PC-3 (cell line): ENCODE measurements at regions of chr2 and their contacts with region 1.

Region 1: DNA sequence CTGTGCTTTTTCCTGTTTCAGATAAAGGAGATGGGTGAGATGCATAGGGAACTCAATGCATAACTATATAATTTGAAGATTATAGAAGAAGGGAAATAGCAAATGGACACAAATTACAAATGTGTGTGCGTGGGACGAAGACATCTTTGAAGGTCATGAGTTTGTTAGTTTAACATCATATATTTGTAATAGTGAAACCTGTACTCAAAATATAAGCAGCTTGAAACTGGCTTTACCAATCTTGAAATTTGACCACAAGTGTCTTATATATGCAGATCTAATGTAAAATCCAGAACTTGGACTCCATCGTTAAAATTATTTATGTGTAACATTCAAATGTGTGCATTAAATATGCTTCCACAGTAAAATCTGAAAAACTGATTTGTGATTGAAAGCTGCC is 16.4 kb upstream of the MSH2 start:
- DNase-seq: no peak
- ATAC-seq: no peak
- H3K4me3 ChIP-seq: no peak overlapping the region
- H3K27ac ChIP-seq: no peak overlapping the region
- H3K4me1 ChIP-seq: no peaks in the 10 kb centered on the region
- H3K27me3 ChIP-seq: no peaks in the 10 kb centered on the region
- CTCF ChIP-seq: no peak

Region 2: DNA sequence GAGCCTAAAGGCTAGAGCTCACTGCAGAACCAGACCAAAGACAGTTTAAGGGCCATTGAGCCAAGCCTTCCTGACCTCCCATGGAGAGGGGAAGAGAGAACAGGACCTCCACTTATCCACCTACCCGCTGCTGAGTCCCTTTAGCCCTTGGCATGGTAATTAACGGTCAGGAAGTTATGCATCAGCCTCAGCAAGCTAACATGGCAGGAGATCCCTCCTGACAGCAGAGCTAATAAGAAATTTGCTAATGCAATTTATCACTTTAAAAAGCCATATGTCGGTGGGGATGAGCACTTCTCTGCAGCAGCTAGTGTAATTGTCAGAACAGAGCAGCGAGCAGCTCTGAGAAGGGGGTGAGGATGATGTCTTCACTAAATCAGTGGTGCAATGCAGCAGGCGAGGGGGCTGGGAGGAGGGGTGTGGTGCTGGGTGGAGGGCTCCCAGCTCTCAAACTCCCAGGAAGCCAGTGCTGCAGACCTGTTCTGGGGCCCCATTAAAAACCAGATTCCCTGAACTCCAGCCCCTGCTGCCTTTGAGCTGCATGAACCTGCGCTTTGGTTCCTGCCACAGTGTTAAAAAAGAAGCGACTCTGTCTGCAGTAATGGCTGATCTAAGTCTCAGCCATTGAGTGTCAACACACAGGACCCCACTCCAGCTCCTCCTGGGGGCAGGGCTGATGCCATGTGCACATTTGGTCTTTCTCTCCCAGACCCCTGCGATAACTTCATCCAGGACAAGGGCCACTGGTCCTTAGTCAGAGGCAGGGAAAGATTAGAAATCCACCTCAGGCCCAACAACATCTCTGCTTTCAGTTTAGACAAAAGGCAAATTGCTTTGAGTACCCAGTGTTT is 147.2 kb before region 1 on chr2:
- CTCF ChIA-PET with region 1: no interaction called
- POLR2A ChIA-PET with region 1: no interaction called
- intact Hi-C with region 1: no loop called
- DNase-seq: no peak
- ATAC-seq: no peak
- H3K4me3 ChIP-seq: no peak overlapping the region
- H3K27ac ChIP-seq: no peak overlapping the region
- H3K4me1 ChIP-seq: no peaks in the 10 kb centered on the region
- H3K27me3 ChIP-seq: no peaks in the 10 kb centered on the region
- CTCF ChIP-seq: no peak

Region 3: DNA sequence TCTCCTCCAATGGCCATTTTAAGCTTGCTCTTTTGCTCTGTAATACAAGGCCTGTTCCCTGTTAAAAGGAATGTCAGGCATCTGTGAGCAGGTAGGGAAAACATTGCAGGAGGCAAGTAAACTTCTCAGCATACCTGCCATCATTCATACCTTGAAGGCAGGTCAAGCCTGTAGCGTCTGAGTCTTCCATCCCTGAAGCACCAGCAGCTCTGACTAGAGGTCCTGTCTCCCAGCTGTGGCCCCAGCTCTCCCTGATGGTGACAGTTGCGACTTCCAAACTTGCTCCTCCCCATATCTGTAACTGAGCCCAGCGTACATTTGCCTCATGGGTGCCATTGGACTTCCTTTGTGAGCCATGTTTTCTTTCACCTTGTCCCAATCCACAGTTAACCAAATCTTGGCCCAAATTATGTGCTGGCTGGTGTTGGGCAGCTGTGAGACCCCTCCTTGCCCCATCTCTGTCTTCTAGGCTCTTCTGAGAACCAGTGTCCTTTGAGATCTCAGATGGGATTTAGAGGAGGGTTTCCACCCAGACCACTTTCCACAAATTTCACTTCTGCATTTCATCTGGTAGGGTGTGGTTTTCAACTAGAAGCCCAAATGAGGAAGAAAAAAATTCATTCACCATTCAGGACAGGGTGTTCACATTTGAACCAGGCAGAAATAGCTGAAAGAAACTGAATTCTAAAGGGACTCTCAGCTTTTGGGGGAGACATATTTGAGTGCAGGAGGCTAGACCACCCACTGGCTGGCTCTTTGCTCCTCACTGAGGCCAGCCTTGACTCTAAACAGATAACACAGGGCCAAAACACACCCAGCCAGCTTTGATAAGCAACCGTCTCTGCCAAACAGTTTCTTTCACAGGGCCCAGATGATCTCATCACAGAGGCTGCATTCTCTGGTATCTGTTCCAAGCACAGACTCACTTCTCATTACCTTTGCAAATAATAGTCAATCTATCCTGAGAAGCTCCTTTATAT is 50.0 kb before region 1 on chr2:
- CTCF ChIA-PET with region 1: interaction called, 46 read pairs
- POLR2A ChIA-PET with region 1: interaction called, 19 read pairs
- intact Hi-C with region 1: loop called (anchors 1 kb)
- DNase-seq: no peak
- ATAC-seq: no peak
- H3K4me3 ChIP-seq: no peak overlapping the region
- H3K27ac ChIP-seq: no peak overlapping the region
- H3K4me1 ChIP-seq: peaks cover 14% of the 10 kb centered on the region
- H3K27me3 ChIP-seq: no peaks in the 10 kb centered on the region
- CTCF ChIP-seq: no peak

Region 4: GRCh38 chr2:47373747-47374146 is 12.8 kb before region 1 on chr2:
- CTCF ChIA-PET with region 1: interaction called, 4 read pairs
- POLR2A ChIA-PET with region 1: interaction called, 7 read pairs
- intact Hi-C with region 1: loop called (anchors 1 kb)
- DNase-seq: peak; percentile 18
- ATAC-seq: no peak
- H3K4me3 ChIP-seq: no peak overlapping the region
- H3K27ac ChIP-seq: no peak overlapping the region
- H3K4me1 ChIP-seq: peaks cover 14% of the 10 kb centered on the region
- H3K27me3 ChIP-seq: no peaks in the 10 kb centered on the region
- CTCF ChIP-seq: peak; percentile 42

Region 5: GRCh38 chr2:47414682-47415458 is 28.3 kb after region 1 on chr2:
- CTCF ChIA-PET with region 1: no interaction called
- POLR2A ChIA-PET with region 1: interaction called, 19 read pairs
- intact Hi-C with region 1: no loop called
- DNase-seq: no peak
- ATAC-seq: peak; percentile 46; the same call in 1 of the 2 replicates
- H3K4me3 ChIP-seq: no peak overlapping the region
- H3K27ac ChIP-seq: no peak overlapping the region
- H3K4me1 ChIP-seq: peaks cover under 1% of the 10 kb centered on the region; the same call in 1 of the 2 replicates
- H3K27me3 ChIP-seq: no peaks in the 10 kb centered on the region
- CTCF ChIP-seq: no peak

Region 6: GRCh38 chr2:47767880-47768609 is 381.5 kb after region 1 on chr2:
- CTCF ChIA-PET with region 1: interaction called, 10 read pairs
- POLR2A ChIA-PET with region 1: no interaction called
- intact Hi-C with region 1: no loop called
- DNase-seq: peak; percentile 66
- ATAC-seq: peak; percentile 77
- H3K4me3 ChIP-seq: peak overlapping the region; percentile 26; the same call in 1 of the 2 replicates
- H3K27ac ChIP-seq: no peak overlapping the region
- H3K4me1 ChIP-seq: no peaks in the 10 kb centered on the region
- H3K27me3 ChIP-seq: no peaks in the 10 kb centered on the region
- CTCF ChIP-seq: peak; percentile 97